ENCODE measurements at regions of chr12 and their contacts with region 1.

Region 1: GRCh38 chr12:49309391-49309790 is 13.7 kb upstream of the TROAP start:
- DNase-seq: no peak
- ATAC-seq: no peak
- H3K4me3 Mint-ChIP-seq: no peak overlapping the region
- H3K27ac Mint-ChIP-seq: no peak overlapping the region
- H3K4me1 Mint-ChIP-seq: no peaks in the 10 kb centered on the region
- H3K27me3 Mint-ChIP-seq: peaks cover 30% of the 10 kb centered on the region

Region 2: GRCh38 chr12:48728807-48729206 is 580.6 kb before region 1 on chr12:
- CTCF ChIA-PET with region 1: no interaction called
- POLR2A ChIA-PET with region 1: interaction called, 10 read pairs
- intact Hi-C with region 1: no loop called
- DNase-seq: no peak
- ATAC-seq: no peak
- H3K4me3 Mint-ChIP-seq: no peak overlapping the region
- H3K27ac Mint-ChIP-seq: no peak overlapping the region
- H3K4me1 Mint-ChIP-seq: no peaks in the 10 kb centered on the region
- H3K27me3 Mint-ChIP-seq: peaks cover 3% of the 10 kb centered on the region